Esophagus muscularis mucosa (tissue), 4 donors: ENCODE measurements at regions of chr16 and their contacts with region 1.

Region 1: GRCh38 chr16:56700195-56700594 is 17.9 kb downstream of the MT1X start:
- DNase-seq: no peak
- H3K4me3 ChIP-seq: no peak overlapping the region
- H3K27ac ChIP-seq: no peak overlapping the region
- H3K4me1 ChIP-seq: peaks cover 3 to 10% (median 6%) of the 10 kb centered on the region in 4 donors
- H3K27me3 ChIP-seq: no peaks in the 10 kb centered on the region
- CTCF ChIP-seq: no peak
- EP300 ChIP-seq: no peak
- POLR2A ChIP-seq: no peak

Region 2: DNA sequence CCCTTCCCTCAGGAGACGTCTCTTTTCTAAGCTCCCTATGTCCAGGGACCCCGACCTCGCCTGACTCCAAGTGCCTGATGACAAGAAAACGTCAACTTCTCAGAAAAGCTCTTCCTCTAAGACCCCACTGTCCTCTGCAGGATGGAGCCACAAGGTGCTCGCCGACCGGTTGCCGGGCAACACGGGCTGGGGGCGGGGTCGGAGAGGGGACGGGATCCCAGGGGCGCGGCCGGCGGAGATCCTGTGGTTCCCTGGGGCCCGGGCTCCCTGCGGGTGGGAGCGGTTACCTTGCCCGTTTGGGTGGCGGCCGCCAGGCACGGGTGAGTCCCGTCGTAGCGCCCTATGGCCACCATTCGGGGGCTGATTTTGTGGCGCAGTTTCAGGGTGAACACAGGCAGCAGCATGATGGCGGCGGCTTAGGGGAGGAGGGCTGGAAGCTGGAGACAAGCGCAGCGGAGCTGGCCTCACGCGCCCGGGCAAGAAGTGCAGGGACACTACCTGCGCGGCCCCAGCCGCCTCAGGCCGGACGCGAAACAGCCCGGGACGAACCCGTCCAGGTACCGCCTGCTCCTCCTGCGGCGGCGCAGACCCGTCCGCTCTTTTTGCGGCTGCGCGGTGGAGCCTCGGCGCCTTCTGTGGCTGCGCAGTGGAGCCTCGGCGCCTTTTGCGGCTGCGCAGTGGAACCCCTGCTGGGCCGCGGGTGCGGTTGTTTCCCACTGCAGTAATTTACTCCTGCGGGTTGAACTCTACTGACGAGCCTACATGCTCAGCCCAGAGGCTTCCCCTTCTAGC is 180.5 kb before region 1 on chr16 and contains the start of gene BBS2:
- intact Hi-C with region 1: loop called (anchors 5 kb)
- DNase-seq: peak; percentile 96
- H3K4me3 ChIP-seq: peak within 1 kb of the TSS; percentile 78 to 99 (median 98)
- H3K27ac ChIP-seq: peak within 1 kb of the TSS; percentile 86 to 91 (median 86)
- H3K4me1 ChIP-seq: peaks cover 32 to 51% (median 43%) of the 10 kb centered on the region in 4 donors
- H3K27me3 ChIP-seq: no peaks in the 10 kb centered on the region
- CTCF ChIP-seq: peak in 1 of 3 experiments; percentile 4
- EP300 ChIP-seq: no peak
- POLR2A ChIP-seq: peak; percentile 60
- total RNA-seq, gene BBS2: 33.2 to 47.8 (median 39.0) TPM

Region 3: DNA sequence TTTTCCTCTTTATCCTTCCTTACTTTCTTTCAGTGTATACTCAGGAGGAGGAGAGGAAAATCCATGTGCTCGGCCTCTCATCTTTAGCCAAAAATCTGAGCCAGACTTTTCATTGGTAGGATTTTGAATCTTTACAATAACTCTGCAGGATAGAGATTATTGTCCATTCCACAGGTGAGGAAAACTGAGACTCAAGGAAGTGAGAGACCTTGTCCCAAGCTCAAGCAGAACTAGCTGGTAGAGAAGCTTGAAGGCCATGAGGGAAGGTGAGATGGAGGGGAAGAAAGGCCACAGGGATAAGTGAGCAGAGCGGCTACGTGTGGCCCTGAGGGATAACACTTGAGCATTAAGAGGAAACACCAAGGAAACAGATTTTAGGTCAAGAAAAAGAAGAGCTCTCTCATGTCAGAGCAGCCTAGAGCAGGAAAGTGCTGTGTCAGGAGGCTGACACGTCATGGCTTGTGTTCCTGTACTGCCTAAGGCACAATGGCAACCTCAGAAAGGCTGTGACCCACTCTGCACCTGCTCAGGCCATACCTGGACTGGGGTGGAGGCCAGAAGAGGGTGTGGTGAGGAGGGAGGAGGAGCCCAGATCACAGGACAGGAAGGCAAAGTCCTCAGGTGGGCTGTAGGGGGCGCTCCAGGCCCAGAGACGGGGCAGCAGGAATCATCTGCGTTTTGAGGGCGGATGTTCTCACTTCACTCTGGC is 123.5 kb before region 1 on chr16:
- intact Hi-C with region 1: loop called (anchors 2 kb)
- DNase-seq: no peak
- H3K4me3 ChIP-seq: no peak overlapping the region
- H3K27ac ChIP-seq: no peak overlapping the region
- H3K4me1 ChIP-seq: peaks cover 0 to 3% (median under 1%) of the 10 kb centered on the region in 4 donors
- H3K27me3 ChIP-seq: no peaks in the 10 kb centered on the region
- CTCF ChIP-seq: peak; percentile 72 to 78 (median 76)
- EP300 ChIP-seq: no peak
- POLR2A ChIP-seq: no peak

Region 4: DNA sequence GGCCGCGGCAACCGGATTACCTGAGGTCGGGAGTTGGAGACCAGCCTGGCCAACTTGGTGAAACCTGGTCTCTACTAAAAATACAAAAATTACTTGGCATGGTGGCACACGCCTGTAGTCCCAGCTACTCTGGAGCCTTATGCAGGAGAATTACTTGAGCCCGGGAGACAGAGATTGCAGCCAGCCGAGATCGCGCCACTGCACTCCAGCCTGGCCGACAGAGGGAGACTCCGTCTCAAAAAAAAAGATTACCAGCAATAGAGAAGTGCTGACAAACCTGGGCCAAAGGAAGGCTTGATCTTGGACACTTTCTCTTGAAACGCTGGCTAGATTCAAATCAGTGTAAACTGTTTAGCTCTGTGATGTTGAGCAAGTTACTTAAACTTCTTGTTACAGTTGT is 26.3 kb before region 1 on chr16:
- intact Hi-C with region 1: loop called (anchors 2 kb)
- DNase-seq: no peak
- H3K4me3 ChIP-seq: no peak overlapping the region
- H3K27ac ChIP-seq: no peak overlapping the region
- H3K4me1 ChIP-seq: peaks cover 11 to 25% (median 20%) of the 10 kb centered on the region in 4 donors
- H3K27me3 ChIP-seq: peaks cover 0 to 85% (median 25%) of the 10 kb centered on the region in 4 donors
- CTCF ChIP-seq: peak; percentile 58 to 67 (median 67)
- EP300 ChIP-seq: no peak
- POLR2A ChIP-seq: no peak

Region 5: GRCh38 chr16:56781528-56781961 is 81.3 kb after region 1 on chr16:
- intact Hi-C with region 1: no loop called
- DNase-seq: no peak
- H3K4me3 ChIP-seq: no peak overlapping the region
- H3K27ac ChIP-seq: no peak overlapping the region
- H3K4me1 ChIP-seq: peaks cover 1 to 15% (median 12%) of the 10 kb centered on the region in 4 donors
- H3K27me3 ChIP-seq: no peaks in the 10 kb centered on the region
- CTCF ChIP-seq: no peak
- EP300 ChIP-seq: no peak
- POLR2A ChIP-seq: no peak